Heart right ventricle (tissue), 16 donors: ENCODE measurements at regions of chr4 and their contacts with region 1.

Region 1: GRCh38 chr4:121686255-121686654 is 10.5 kb downstream of the ANXA5 start:
- DNase-seq: no peak
- ATAC-seq: no peak
- H3K4me3 ChIP-seq: no peak overlapping the region
- H3K27ac ChIP-seq: no peak overlapping the region
- H3K4me1 ChIP-seq: peaks cover under 1 to 51% (median 36%) of the 10 kb centered on the region in 9 donors
- H3K27me3 ChIP-seq: no peaks in the 10 kb centered on the region
- CTCF ChIP-seq: no peak

Region 2: DNA sequence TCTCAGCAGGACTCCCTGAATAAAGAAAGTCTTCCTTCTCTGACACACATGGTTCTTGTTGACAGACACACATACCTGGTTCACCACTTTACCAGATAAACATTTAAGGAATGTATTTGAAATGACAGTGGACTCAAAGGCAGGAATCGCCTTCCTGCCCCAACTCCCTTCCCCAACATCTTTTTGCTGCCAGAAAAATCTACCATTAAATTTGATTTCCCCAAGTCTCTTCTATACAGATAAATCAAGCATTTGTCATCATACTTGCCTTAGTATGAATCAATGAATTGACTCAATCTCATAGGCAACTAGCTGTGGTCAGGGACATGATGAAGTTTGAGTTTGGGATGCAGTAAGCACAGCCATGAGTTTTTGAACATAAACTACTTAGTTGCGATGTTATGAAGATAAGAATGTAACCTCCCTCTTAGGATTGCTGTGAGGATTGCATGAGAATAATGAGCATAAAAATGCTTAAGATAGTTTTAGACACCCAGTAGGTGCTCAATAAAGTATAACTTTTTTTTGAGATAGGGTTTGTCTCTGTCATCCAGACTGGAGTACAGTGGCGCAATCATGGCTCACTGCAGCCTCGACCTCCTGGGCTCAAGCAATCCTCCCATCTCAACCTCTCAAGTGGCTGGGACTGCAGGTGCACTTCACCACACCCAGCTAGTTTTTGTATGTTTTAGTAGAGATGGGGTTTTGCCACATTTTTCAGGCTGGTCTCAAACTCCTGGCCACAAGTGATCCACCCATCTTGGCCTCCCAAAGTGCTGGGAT is 34.1 kb after region 1 on chr4:
- intact Hi-C with region 1: loop called in 2 of 10 experiments (anchors 5 kb)
- DNase-seq: no peak
- ATAC-seq: no peak
- H3K4me3 ChIP-seq: no peak overlapping the region
- H3K27ac ChIP-seq: no peak overlapping the region
- H3K4me1 ChIP-seq: no peaks in the 10 kb centered on the region
- H3K27me3 ChIP-seq: no peaks in the 10 kb centered on the region
- CTCF ChIP-seq: no peak

Region 3: GRCh38 chr4:121800961-121801714 is 114.9 kb after region 1 on chr4 and contains the start of gene EXOSC9:
- intact Hi-C with region 1: loop called in 1 of 10 experiments (anchors 10 kb)
- DNase-seq: peak; percentile 95 to 96
- ATAC-seq: peak; percentile 96 to 99 (median 98)
- H3K4me3 ChIP-seq: peak within 1 kb of the TSS; percentile 76 to 94 (median 83)
- H3K27ac ChIP-seq: peak within 1 kb of the TSS; percentile 70 to 94 (median 87)
- H3K4me1 ChIP-seq: peaks cover 0 to 27% (median 10%) of the 10 kb centered on the region in 9 donors
- H3K27me3 ChIP-seq: no peaks in the 10 kb centered on the region
- CTCF ChIP-seq: no peak
- total RNA-seq, gene EXOSC9: 10.7 to 15.4 (median 13.1) TPM

Region 4: DNA sequence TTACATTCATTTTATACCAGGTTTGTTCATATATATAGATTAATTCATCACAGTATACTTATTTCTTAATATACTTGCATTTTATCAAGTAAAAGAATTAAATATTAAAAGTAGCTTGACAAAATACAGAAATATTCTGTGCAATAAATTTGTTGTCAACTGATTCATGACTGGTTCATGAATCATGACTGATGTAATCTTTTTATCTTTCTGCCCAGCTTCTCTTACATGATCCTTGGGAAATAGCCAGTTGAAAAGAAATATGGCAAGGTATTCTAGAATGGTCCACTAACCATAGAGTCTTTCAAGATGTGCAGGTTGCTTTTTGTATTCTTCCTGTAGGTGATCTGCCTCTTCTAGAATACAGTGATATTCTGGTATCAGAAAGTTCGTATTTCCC is 141.6 kb after region 1 on chr4:
- intact Hi-C with region 1: no loop called
- DNase-seq: no peak
- ATAC-seq: no peak
- H3K4me3 ChIP-seq: no peak overlapping the region
- H3K27ac ChIP-seq: no peak overlapping the region
- H3K4me1 ChIP-seq: peaks cover 0 to 16% (median 7%) of the 10 kb centered on the region in 9 donors
- H3K27me3 ChIP-seq: no peaks in the 10 kb centered on the region
- CTCF ChIP-seq: no peak